Thyroid gland (tissue), 4 donors: ENCODE measurements at regions of chr11 and their contacts with region 1.

Region 1: DNA sequence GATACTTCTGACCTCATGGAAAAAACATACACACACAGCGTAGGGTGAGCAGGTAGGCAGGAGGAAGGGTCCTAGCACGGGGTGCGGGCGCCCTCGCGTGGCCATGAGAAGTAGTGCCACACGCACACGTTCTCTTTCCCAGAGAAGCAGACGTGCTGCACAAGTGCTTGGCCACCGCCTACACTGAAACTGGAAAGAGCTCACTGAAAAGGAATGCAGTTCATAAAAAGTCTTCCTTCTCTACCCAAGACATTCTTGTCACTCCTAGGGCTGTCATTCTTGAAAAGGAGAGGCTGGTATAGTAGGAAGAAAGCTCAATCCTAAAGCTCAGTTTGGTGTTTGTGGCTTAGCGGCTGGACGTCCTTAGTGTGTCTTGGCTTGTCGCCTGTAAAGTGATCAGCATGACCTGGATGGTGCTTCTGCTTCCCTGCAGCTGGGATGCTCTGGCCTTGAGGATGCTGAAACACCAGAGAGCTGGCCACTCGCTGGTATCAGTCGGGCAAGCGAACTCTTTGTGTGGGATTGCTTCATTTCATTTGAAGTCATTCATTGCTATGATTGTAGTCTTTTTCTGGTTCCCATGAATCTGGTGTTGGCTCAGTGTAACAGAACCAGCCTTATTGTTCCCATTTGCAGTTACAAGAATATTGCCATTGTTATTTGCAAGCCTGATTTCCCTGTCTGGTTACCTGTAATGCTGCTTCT is 303.8 kb downstream of the NTM start:
- DNase-seq: peak; percentile 79 to 86
- H3K4me3 ChIP-seq: no peak overlapping the region
- H3K27ac ChIP-seq: no peak overlapping the region
- H3K4me1 ChIP-seq: peaks cover 0 to 8% of the 10 kb centered on the region in 2 donors
- H3K27me3 ChIP-seq: no peaks in the 10 kb centered on the region
- CTCF ChIP-seq: peak; percentile 81 to 96 (median 90)
- POLR2A ChIP-seq: no peak

Region 2: GRCh38 chr11:131423715-131424114 is 250.5 kb before region 1 on chr11:
- intact Hi-C with region 1: no loop called
- DNase-seq: no peak
- H3K4me3 ChIP-seq: no peak overlapping the region
- H3K27ac ChIP-seq: no peak overlapping the region
- H3K4me1 ChIP-seq: no peaks in the 10 kb centered on the region
- H3K27me3 ChIP-seq: no peaks in the 10 kb centered on the region
- CTCF ChIP-seq: no peak
- POLR2A ChIP-seq: no peak

Region 3: GRCh38 chr11:131561501-131561900 is 112.7 kb before region 1 on chr11:
- intact Hi-C with region 1: loop called (anchors 10 kb)
- DNase-seq: no peak
- H3K4me3 ChIP-seq: no peak overlapping the region
- H3K27ac ChIP-seq: no peak overlapping the region
- H3K4me1 ChIP-seq: no peaks in the 10 kb centered on the region
- H3K27me3 ChIP-seq: no peaks in the 10 kb centered on the region
- CTCF ChIP-seq: no peak
- POLR2A ChIP-seq: no peak

Region 4: GRCh38 chr11:131712897-131713296 is 38.7 kb after region 1 on chr11:
- intact Hi-C with region 1: no loop called
- DNase-seq: no peak
- H3K4me3 ChIP-seq: no peak overlapping the region
- H3K27ac ChIP-seq: no peak overlapping the region
- H3K4me1 ChIP-seq: no peaks in the 10 kb centered on the region
- H3K27me3 ChIP-seq: no peaks in the 10 kb centered on the region
- CTCF ChIP-seq: no peak
- POLR2A ChIP-seq: no peak

Region 5: GRCh38 chr11:131734871-131735270 is 60.7 kb after region 1 on chr11:
- intact Hi-C with region 1: no loop called
- DNase-seq: no peak
- H3K4me3 ChIP-seq: no peak overlapping the region
- H3K27ac ChIP-seq: no peak overlapping the region
- H3K4me1 ChIP-seq: no peaks in the 10 kb centered on the region
- H3K27me3 ChIP-seq: no peaks in the 10 kb centered on the region
- CTCF ChIP-seq: no peak
- POLR2A ChIP-seq: no peak

Region 6: GRCh38 chr11:132456746-132457328 is 782.6 kb after region 1 on chr11:
- intact Hi-C with region 1: no loop called
- DNase-seq: peak; percentile 8 to 15
- H3K4me3 ChIP-seq: no peak overlapping the region
- H3K27ac ChIP-seq: no peak overlapping the region
- H3K4me1 ChIP-seq: no peaks in the 10 kb centered on the region
- H3K27me3 ChIP-seq: no peaks in the 10 kb centered on the region
- CTCF ChIP-seq: no peak
- POLR2A ChIP-seq: no peak